ENCODE measurements at regions of chr1 and their contacts with region 1.

Region 1: GRCh38 chr1:167943541-167943940 is 6.7 kb upstream of the MPC2 start:
- DNase-seq: no peak
- H3K4me3 ChIP-seq: no peak overlapping the region
- H3K4me3 Mint-ChIP-seq: no peak overlapping the region
- H3K27ac ChIP-seq: no peak overlapping the region
- H3K27ac Mint-ChIP-seq: no peak overlapping the region
- H3K4me1 ChIP-seq: peaks cover 8% of the 10 kb centered on the region
- H3K4me1 Mint-ChIP-seq: peaks cover 32 to 59% (median 44%) of the 10 kb centered on the region in 4 donors
- H3K27me3 ChIP-seq: no peaks in the 10 kb centered on the region
- H3K27me3 Mint-ChIP-seq: no peaks in the 10 kb centered on the region

Region 2: GRCh38 chr1:168019407-168019806 is 75.9 kb after region 1 on chr1:
- CTCF ChIA-PET with region 1: no interaction called
- POLR2A ChIA-PET with region 1: no interaction called
- intact Hi-C with region 1: loop called (anchors 10 kb)
- DNase-seq: no peak
- H3K4me3 ChIP-seq: no peak overlapping the region
- H3K4me3 Mint-ChIP-seq: no peak overlapping the region
- H3K27ac ChIP-seq: no peak overlapping the region
- H3K27ac Mint-ChIP-seq: no peak overlapping the region
- H3K4me1 ChIP-seq: no peaks in the 10 kb centered on the region
- H3K4me1 Mint-ChIP-seq: peaks cover 0 to 2% (median 0%) of the 10 kb centered on the region in 4 donors
- H3K27me3 ChIP-seq: no peaks in the 10 kb centered on the region
- H3K27me3 Mint-ChIP-seq: no peaks in the 10 kb centered on the region

Region 3: DNA sequence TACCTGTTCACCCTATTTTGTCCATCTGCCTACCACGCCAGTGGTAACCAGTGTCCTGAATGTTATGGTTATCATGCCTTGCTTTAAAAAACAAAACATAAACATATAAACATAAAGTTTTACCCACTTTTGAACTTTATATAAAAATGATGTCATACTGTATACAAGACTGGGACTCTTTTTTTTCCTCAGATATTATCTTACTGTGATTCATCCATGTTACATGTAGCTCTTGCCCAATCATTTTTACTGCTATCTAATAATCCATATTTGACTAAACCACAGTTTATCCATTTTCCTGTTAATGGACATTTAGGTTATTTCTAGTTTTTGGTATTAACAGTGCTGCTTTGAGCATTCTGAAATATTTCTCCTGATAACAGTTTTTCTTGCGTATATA is 114.4 kb after region 1 on chr1:
- CTCF ChIA-PET with region 1: no interaction called
- POLR2A ChIA-PET with region 1: no interaction called
- intact Hi-C with region 1: no loop called
- DNase-seq: no peak
- H3K4me3 ChIP-seq: no peak overlapping the region
- H3K4me3 Mint-ChIP-seq: no peak overlapping the region
- H3K27ac ChIP-seq: no peak overlapping the region
- H3K27ac Mint-ChIP-seq: no peak overlapping the region
- H3K4me1 ChIP-seq: peaks cover 7% of the 10 kb centered on the region
- H3K4me1 Mint-ChIP-seq: peaks cover 0 to 4% (median 2%) of the 10 kb centered on the region in 4 donors
- H3K27me3 ChIP-seq: no peaks in the 10 kb centered on the region
- H3K27me3 Mint-ChIP-seq: no peaks in the 10 kb centered on the region